Esophagus muscularis mucosa (tissue), 4 donors: ENCODE measurements at regions of chr15 and their contacts with region 1.

Region 1: DNA sequence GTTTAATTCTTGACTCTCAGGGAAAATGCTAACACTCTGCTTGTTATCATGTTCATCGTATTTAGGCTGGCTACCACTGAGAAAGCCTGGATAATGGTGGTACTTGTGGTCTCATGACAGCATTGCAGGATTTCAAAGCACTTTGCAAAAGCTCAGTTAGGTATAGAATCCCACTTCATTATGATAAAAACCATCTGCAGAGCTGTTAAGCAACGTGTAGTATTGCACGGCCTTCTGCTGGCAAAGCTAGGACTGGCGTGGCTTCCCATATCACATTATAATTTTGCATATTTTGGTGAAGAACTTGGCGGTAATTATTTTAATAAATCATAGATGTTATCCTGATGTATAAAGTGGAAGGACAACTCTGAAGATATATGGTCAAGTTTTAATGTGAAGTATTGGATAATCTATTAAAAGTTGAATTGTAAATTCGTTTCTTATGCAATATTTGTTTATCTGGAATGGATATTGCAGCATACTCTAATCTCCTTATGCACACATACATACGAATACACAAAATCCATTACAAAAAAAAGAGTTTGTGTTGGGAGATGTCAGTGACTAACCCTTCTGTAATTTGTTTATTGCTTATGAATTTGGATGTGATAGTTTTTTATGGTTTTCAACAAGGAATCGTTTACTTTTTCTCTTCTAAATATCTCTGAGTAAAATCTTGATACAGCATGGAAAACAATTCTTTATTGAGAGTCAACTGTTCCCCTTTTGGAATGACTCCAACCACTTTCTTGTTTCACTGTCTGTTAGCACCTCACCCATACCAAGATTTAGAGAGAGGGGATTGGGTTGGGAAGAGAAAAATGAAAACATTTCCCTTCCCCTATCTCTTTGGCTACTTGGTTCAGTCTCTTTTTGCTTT is 9.2 kb downstream of the RAB8B start:
- DNase-seq: no peak
- H3K4me3 ChIP-seq: no peak overlapping the region
- H3K27ac ChIP-seq: no peak overlapping the region
- H3K4me1 ChIP-seq: peaks cover 27 to 63% (median 50%) of the 10 kb centered on the region in 4 donors
- H3K27me3 ChIP-seq: no peaks in the 10 kb centered on the region
- CTCF ChIP-seq: no peak
- EP300 ChIP-seq: no peak
- POLR2A ChIP-seq: no peak

Region 2: DNA sequence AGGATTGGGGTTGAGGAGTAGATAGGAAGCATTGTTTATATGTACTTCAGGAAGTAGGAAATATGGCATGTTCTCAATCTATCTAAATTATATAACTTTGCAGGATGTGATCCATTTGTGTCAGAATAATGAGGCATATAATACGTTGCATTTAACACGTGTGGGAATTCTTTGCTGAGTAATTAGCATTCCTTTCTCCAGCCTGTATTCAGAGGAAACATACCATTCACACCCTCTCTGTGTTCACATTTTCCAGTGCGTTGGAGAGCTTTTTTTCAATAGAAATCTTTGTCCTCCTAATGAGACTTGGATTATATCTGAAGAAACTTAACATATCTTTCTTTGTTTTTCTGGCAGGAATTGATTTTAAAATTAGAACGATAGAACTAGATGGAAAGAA is 45.8 kb after region 1 on chr15:
- intact Hi-C with region 1: loop called (anchors 5 kb)
- DNase-seq: no peak
- H3K4me3 ChIP-seq: no peak overlapping the region
- H3K27ac ChIP-seq: peak overlapping the region; percentile 62 to 79 (median 68)
- H3K4me1 ChIP-seq: peaks cover 33 to 77% (median 64%) of the 10 kb centered on the region in 4 donors
- H3K27me3 ChIP-seq: no peaks in the 10 kb centered on the region
- CTCF ChIP-seq: no peak
- EP300 ChIP-seq: no peak
- POLR2A ChIP-seq: no peak